ENCODE measurements at regions of chr1 and their contacts with region 1.

Region 1: DNA sequence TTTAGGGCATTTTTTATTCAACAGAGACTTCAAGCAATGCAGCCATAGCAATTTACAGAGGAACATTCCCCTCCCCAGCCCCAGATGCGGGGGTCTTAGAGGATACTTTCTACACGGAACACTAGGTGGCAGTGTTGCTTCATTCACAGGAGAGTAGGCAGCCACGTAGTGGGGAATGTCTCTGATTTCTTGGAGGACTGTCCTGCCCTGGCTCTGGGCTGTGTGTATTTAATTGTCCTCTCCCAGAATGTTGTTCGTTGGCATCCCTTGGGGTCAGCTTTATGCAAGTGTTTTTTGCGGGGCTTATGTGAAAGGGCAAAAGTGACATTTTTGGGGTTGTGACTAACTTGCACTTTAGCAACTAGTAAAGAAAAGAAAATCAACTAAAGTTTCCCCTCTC is 96.9 kb downstream of the PAPPA2 start:
- DNase-seq: peak; percentile 41
- ATAC-seq: peak; percentile 89 to 96
- H3K4me3 ChIP-seq: no peak overlapping the region
- H3K27ac ChIP-seq: no peak overlapping the region
- H3K4me1 ChIP-seq: no peaks in the 10 kb centered on the region
- H3K27me3 ChIP-seq: peaks cover 0 to 7% (median 4%) of the 10 kb centered on the region in 3 donors
- CTCF ChIP-seq: peak; percentile 82 to 90 (median 86)
- POLR2A ChIP-seq: no peak

Region 2: GRCh38 chr1:176364236-176364905 is 195.5 kb before region 1 on chr1:
- in situ Hi-C with region 1: loop called in 1 of 4 experiments (anchors 10 kb)
- intact Hi-C with region 1: no loop called
- DNase-seq: no peak
- ATAC-seq: no peak
- H3K4me3 ChIP-seq: no peak overlapping the region
- H3K27ac ChIP-seq: no peak overlapping the region
- H3K4me1 ChIP-seq: no peaks in the 10 kb centered on the region
- H3K27me3 ChIP-seq: no peaks in the 10 kb centered on the region
- CTCF ChIP-seq: no peak
- POLR2A ChIP-seq: no peak

Region 3: DNA sequence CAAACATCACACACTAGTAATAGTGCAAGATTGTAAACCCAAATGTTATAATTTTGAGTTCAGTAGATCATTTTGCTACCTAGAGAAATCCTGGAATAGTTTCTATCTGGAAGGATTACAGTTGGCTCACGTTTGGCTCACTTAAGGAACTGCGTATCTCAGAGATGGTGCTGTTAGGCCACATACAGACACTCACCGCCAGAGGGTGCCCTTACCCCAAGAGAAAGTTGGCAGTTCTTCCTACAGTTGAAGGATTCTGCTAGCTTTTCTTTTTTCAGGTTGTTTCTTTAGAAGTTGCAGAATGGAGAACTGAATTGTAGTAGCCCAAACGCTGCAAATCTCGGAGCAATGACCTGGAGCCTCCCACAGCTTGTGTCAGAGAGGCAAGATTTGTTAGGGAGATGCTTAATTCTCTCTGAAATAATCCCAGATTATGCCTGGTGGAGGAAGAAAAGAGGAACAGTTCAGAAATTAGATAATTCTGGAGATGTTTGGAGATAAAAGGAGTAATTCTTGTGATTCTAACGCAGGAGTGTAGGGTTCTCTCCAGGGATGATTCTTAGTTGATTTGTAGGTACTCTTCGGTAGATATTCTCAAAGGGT is 184.8 kb before region 1 on chr1:
- in situ Hi-C with region 1: no loop called
- intact Hi-C with region 1: loop called (anchors 2 kb)
- DNase-seq: peak; percentile 32 to 61
- ATAC-seq: peak; percentile 68 to 81
- H3K4me3 ChIP-seq: no peak overlapping the region
- H3K27ac ChIP-seq: no peak overlapping the region
- H3K4me1 ChIP-seq: no peaks in the 10 kb centered on the region
- H3K27me3 ChIP-seq: no peaks in the 10 kb centered on the region
- CTCF ChIP-seq: peak; percentile 61 to 78 (median 72)
- POLR2A ChIP-seq: no peak

Region 4: DNA sequence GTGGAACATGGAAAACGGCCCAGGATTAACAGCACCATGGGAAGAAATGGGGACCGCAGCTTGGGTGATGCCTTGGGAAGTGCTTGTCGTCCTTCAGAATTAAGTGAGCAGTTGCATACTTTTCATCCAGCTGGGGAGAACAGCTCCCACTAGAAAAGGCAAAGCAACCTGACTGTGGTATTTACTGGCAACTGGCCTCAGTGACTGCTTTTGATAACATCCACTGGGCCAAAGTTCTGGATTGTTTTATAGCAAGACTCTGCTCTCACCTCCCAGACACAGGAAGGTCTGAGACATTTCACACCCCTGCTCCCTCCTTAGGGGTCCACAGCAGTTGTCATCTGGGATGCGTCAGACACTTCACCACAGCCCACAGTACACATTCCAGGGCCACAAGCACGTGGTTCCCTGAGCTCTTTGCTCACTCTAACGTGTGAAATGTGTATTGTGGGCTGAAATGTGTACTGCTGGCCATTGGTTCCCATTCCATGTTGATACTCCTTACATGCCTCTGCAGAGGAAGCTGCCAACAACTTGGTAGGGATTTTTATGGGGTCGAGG is 90.3 kb before region 1 on chr1:
- in situ Hi-C with region 1: no loop called
- intact Hi-C with region 1: no loop called
- DNase-seq: no peak
- ATAC-seq: no peak
- H3K4me3 ChIP-seq: no peak overlapping the region
- H3K27ac ChIP-seq: no peak overlapping the region
- H3K4me1 ChIP-seq: no peaks in the 10 kb centered on the region
- H3K27me3 ChIP-seq: no peaks in the 10 kb centered on the region
- CTCF ChIP-seq: no peak
- POLR2A ChIP-seq: no peak

Region 5: GRCh38 chr1:176601348-176601747 is 41.5 kb after region 1 on chr1:
- in situ Hi-C with region 1: no loop called
- intact Hi-C with region 1: no loop called
- DNase-seq: no peak
- ATAC-seq: no peak
- H3K4me3 ChIP-seq: no peak overlapping the region
- H3K27ac ChIP-seq: no peak overlapping the region
- H3K4me1 ChIP-seq: no peaks in the 10 kb centered on the region
- H3K27me3 ChIP-seq: no peaks in the 10 kb centered on the region
- CTCF ChIP-seq: no peak
- POLR2A ChIP-seq: no peak

Region 6: GRCh38 chr1:176656257-176656995 is 96.5 kb after region 1 on chr1:
- in situ Hi-C with region 1: no loop called
- intact Hi-C with region 1: no loop called
- DNase-seq: peak; percentile 48 to 63
- ATAC-seq: peak; percentile 99
- H3K4me3 ChIP-seq: no peak overlapping the region
- H3K27ac ChIP-seq: peak overlapping the region; percentile 58 to 67 (median 62)
- H3K4me1 ChIP-seq: peaks cover 9 to 11% of the 10 kb centered on the region in 2 donors
- H3K27me3 ChIP-seq: no peaks in the 10 kb centered on the region
- CTCF ChIP-seq: no peak
- POLR2A ChIP-seq: no peak

Region 7: GRCh38 chr1:176682830-176683535 is 123.1 kb after region 1 on chr1:
- in situ Hi-C with region 1: loop called in 2 of 4 experiments (anchors 10 to 25 kb)
- intact Hi-C with region 1: no loop called
- DNase-seq: no peak
- ATAC-seq: no peak
- H3K4me3 ChIP-seq: no peak overlapping the region
- H3K27ac ChIP-seq: no peak overlapping the region
- H3K4me1 ChIP-seq: no peaks in the 10 kb centered on the region
- H3K27me3 ChIP-seq: no peaks in the 10 kb centered on the region
- CTCF ChIP-seq: no peak
- POLR2A ChIP-seq: no peak

Region 8: GRCh38 chr1:176691251-176692228 is 131.7 kb after region 1 on chr1:
- in situ Hi-C with region 1: loop called in 2 of 4 experiments (anchors 10 to 25 kb)
- intact Hi-C with region 1: loop called (anchors 1 kb)
- DNase-seq: peak; percentile 62 to 66
- ATAC-seq: peak; percentile 70 to 79
- H3K4me3 ChIP-seq: no peak overlapping the region
- H3K27ac ChIP-seq: peak overlapping the region; percentile 67 to 88 (median 84)
- H3K4me1 ChIP-seq: peaks cover 15 to 38% of the 10 kb centered on the region in 2 donors
- H3K27me3 ChIP-seq: no peaks in the 10 kb centered on the region
- CTCF ChIP-seq: peak; percentile 47 to 66 (median 50)
- POLR2A ChIP-seq: no peak

Region 9: DNA sequence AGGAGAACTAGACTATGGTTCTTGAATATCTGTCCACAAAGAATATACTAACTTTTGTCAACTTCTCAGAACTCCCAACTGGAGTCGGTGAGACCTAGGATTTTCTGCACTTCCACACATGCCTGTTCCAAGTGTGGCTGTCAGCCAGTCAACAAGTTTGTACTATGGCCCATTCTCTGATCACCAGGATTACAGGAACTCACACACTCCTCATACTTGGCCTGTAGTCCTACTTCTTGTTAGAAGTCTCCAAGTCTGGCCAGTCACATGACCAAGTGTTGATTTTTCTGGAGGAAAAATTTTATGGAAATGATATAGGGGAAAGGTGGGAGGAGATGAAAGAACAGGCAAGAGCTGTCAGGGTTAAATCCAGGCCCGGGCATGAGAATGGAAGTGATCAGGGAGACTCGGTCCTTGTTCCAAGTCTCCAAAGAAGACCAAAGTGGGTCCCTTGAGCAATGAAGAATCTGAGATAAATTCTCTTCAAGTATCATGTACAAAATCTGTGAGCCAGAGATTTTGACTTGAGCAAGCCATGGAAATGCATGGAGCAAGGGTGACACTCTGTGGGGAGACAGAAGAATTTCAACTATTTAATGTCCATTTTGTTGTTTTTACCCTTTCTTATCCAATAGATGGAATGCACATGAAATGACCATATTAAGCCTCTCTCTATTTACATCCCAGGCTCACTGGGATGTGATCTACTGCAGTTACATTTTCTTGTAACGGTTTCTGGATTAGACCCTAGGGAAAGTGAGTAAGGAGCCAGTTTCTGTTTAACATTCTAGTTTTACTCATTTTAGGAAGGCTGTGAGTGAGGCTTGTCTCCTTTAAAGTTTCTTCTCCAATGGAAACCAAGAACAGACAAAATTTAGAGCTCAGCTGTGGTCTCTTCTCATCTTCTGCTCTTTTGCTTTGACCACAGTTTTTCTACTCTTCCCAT is 283.7 kb after region 1 on chr1:
- in situ Hi-C with region 1: loop called in 2 of 4 experiments (anchors 5 to 10 kb)
- intact Hi-C with region 1: loop called (anchors 1 kb)
- DNase-seq: no peak
- ATAC-seq: peak; percentile 56 to 57
- H3K4me3 ChIP-seq: no peak overlapping the region
- H3K27ac ChIP-seq: no peak overlapping the region
- H3K4me1 ChIP-seq: no peaks in the 10 kb centered on the region
- H3K27me3 ChIP-seq: no peaks in the 10 kb centered on the region
- CTCF ChIP-seq: peak; percentile 58 to 77 (median 67)
- POLR2A ChIP-seq: no peak

Region 10: DNA sequence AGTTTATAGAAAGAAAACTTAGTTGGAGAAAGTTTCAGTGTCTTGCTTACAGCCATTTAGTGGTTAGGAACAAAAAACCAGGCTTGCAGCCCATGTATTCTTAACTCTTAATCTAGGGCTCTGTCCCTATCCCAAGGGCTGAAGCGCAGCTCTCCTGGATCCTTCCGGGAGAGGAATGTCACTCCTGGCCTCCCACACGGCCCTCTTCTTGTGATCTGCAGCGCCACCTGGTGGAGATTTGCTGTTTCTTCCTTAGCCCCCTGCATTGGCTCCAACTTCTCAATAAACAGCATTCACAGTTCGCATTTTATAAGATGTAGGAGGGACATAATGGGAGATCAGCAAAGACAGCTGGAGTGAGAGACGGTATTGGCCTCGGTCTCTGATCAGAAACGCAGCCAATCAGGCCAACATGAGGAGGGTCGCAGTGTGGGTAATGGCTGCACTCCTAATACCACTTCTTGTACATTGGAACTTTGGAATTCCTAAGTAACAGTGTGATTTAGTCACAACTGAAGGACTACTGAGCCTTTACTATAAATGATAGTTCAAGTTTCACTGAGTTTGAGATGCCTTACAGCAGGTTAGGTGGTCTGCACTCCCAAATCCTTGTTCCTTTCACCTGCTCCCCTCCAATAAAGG is 321.2 kb after region 1 on chr1:
- in situ Hi-C with region 1: loop called in 3 of 4 experiments (anchors 5 to 10 kb)
- intact Hi-C with region 1: loop called (anchors 1 kb)
- DNase-seq: peak; percentile 26 to 42
- ATAC-seq: peak in 1 of 2 donors; percentile 87
- H3K4me3 ChIP-seq: no peak overlapping the region
- H3K27ac ChIP-seq: no peak overlapping the region
- H3K4me1 ChIP-seq: no peaks in the 10 kb centered on the region
- H3K27me3 ChIP-seq: no peaks in the 10 kb centered on the region
- CTCF ChIP-seq: peak; percentile 60 to 80 (median 76)
- POLR2A ChIP-seq: no peak

Measured in gastrocnemius medialis (tissue), 4 donors.